Mammary epithelial cell (primary cell): ENCODE measurements at regions of chr4 and their contacts with region 1.

Region 1: DNA sequence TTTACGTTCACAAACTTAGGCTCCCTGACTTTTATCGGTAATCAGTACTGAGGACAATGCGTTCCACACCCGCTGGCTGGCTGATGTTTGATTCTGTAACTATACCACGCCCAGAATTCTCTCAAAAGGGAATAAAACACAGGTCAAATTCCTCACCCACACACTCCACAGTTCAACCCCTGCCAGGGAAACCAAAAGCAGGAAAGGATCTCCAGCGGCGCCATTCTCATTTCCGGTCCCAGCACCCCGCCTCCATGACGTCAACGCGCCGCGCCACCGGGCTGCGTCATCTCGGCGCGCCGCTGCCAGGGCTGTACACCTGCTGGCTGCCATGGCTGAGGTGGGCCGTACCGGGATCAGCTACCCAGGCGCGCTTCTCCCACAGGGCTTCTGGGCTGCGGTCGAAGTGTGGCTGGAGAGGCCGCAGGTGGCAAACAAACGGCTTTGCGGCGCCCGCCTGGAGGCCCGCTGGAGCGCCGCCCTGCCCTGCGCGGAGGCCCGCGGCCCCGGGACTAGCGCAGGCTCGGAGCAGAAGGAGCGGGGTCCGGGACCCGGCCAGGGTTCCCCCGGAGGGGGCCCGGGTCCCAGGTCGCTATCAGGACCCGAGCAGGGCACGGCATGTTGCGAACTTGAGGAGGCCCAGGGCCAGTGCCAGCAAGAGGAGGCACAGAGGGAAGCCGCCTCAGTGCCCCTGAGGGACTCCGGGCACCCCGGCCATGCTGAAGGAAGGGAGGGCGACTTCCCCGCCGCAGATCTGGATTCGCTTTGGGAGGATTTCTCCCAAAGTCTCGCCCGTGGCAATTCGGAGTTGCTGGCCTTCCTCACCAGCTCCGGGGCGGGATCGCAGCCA is at the starts of genes ACOX3 and TRMT44:
- DNase-seq: peak; percentile 94
- H3K4me3 ChIP-seq: peak within 1 kb of the TSS; percentile 63 to 87 (median 69)
- H3K27ac ChIP-seq: peak within 1 kb of the TSS; percentile 92
- H3K4me1 ChIP-seq: peaks cover 42% of the 10 kb centered on the region
- H3K27me3 ChIP-seq: no peaks in the 10 kb centered on the region
- CTCF ChIP-seq: no peak
- total RNA-seq, gene ACOX3: 19.6 to 94.0 TPM
- total RNA-seq, gene TRMT44: 18.5 to 20.3 TPM

Region 2: DNA sequence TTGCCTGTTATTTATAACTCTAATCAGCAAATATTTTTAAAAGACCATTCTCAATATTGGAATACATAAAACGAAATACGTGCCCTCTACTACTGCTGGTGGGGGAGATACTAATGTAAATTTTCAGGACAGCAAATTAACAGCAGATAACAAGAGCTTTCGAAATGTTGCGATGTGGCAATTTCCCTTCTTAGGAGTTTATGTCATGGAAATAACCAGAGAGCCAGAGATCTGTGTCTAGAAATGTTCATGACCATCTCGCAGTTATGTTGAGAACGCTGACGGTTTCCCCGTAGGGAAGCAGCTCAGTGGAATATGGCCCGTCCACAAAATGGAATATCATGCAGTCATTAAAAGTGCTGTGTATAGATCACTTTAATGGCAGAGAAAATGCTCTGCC is 767.6 kb before region 1 on chr4:
- CTCF ChIA-PET with region 1: no interaction called
- dilution Hi-C with region 1: no loop called
- in situ Hi-C with region 1: no loop called
- intact Hi-C with region 1: no loop called
- DNase-seq: no peak
- H3K4me3 ChIP-seq: no peak overlapping the region
- H3K27ac ChIP-seq: no peak overlapping the region
- H3K4me1 ChIP-seq: peaks cover 15% of the 10 kb centered on the region
- H3K27me3 ChIP-seq: no peaks in the 10 kb centered on the region
- CTCF ChIP-seq: no peak

Region 3: DNA sequence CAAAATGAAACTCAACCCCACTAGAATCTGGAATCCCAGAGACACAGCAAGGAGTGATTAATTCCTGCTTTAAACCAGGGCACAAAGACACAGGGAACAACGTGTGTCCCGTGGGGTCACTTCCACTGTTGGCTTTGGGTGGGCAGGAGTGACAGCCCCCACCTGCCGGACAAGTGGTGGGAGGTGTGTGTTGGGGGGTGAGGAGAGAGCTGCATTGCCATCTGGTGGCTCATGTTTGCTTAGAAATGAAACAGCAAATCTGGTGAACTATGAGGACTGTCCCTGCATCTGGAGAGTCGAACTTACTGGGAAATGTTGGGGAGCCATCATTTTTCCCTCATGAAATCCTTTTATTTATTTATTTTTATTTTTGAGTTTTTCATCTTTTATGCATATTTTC is 425.2 kb before region 1 on chr4:
- CTCF ChIA-PET with region 1: no interaction called
- dilution Hi-C with region 1: no loop called
- in situ Hi-C with region 1: no loop called
- intact Hi-C with region 1: no loop called
- DNase-seq: no peak
- H3K4me3 ChIP-seq: no peak overlapping the region
- H3K27ac ChIP-seq: no peak overlapping the region
- H3K4me1 ChIP-seq: no peaks in the 10 kb centered on the region
- H3K27me3 ChIP-seq: peaks cover 3% of the 10 kb centered on the region
- CTCF ChIP-seq: peak; percentile 7 to 47

Region 4: DNA sequence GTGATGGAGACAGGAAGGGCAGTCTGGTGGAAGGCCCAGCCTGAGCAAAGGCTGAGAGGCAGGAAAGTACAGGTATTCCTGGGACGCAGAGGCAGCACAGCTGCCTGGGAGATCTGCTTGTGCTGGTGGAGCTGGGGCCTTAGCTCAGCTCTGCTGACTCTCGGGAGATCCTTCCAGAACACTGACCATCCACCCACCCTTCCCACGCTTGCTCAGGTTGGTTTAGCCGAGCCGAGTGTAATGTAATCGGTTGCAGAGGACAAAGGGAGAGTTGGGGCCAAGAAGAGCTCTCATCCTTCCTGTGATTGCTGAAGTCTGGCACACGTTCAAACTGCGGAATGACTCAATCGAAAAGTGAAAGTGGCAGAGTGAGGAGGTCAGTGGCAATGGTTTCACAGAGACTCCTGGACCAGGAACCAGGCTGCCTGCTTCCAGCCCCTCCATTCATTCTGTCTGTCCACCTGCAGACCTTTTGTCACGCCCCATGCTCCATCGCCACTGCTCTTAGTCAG is 96.4 kb after region 1 on chr4:
- CTCF ChIA-PET with region 1: no interaction called
- dilution Hi-C with region 1: no loop called
- in situ Hi-C with region 1: no loop called
- intact Hi-C with region 1: loop called (anchors 5 kb)
- DNase-seq: peak; percentile 97
- H3K4me3 ChIP-seq: no peak overlapping the region
- H3K27ac ChIP-seq: no peak overlapping the region
- H3K4me1 ChIP-seq: peaks cover 47% of the 10 kb centered on the region
- H3K27me3 ChIP-seq: no peaks in the 10 kb centered on the region
- CTCF ChIP-seq: no peak